Astrocyte of the cerebellum (primary cell): ENCODE measurements at regions of chr20 and their contacts with region 1.

Region 1: GRCh38 chr20:51393571-51393970 is 148.9 kb downstream of the NFATC2 start:
- DNase-seq: no peak
- H3K4me3 ChIP-seq: no peak overlapping the region
- CTCF ChIP-seq: no peak

Region 2: GRCh38 chr20:50953821-50954220 is 439.8 kb before region 1 on chr20:
- in situ Hi-C with region 1: no loop called
- DNase-seq: no peak
- H3K4me3 ChIP-seq: no peak overlapping the region
- CTCF ChIP-seq: no peak

Region 3: DNA sequence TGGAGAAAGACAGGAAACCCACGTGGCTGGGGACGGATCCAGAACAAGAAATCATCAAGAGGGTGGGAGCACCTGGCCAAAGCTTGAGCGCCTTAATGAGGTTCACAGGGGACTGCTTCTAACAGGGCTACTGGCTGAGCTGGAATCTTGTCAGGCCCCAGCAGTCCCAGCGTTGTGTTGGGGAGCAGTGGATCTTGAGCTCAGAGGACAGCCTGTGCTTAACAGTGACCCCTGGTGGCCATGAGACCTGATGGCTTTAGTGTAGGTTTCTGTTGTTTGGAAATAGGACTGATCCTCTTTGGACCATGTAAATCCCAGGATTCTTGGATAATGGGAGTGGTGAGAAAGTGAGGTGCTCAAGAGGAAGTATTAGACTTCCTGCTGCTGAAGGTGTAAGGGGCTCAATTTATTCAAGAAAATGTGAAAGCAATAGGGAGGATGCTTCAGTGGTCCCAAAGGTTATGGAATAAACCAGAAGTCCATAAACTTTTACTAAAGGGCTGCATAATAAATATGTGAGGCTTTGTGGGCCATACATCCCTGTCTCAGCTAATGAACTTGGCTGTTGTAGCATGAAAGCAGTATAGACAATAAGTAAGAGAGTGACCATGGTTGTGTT is 67.3 kb before region 1 on chr20:
- in situ Hi-C with region 1: loop called (anchors 5 kb)
- DNase-seq: no peak
- H3K4me3 ChIP-seq: no peak overlapping the region
- CTCF ChIP-seq: peak; percentile 56